ENCODE measurements at regions of chr5 and their contacts with region 1.

Region 1: GRCh38 chr5:7745882-7746610 is 104.9 kb downstream of the CFAP90 start:
- DNase-seq: peak; percentile 48 to 72
- ATAC-seq: peak; percentile 63 to 87; a peak in 4 of 6 replicates
- H3K4me3 ChIP-seq: no peak overlapping the region
- H3K27ac ChIP-seq: no peak overlapping the region
- H3K4me1 ChIP-seq: no peaks in the 10 kb centered on the region
- CTCF ChIP-seq: peak; percentile 70
- EP300 ChIP-seq: no peak
- POLR2A ChIP-seq: no peak
- RAD21 ChIP-seq: peak; percentile 69 to 75

Region 2: GRCh38 chr5:7261049-7261448 is 485.0 kb before region 1 on chr5:
- CTCF ChIA-PET with region 1: interaction called, 15 read pairs
- POLR2A ChIA-PET with region 1: no interaction called
- DNase-seq: peak; percentile 16 to 50
- ATAC-seq: peak; percentile 34 to 74; a peak in 4 of 6 replicates
- H3K4me3 ChIP-seq: no peak overlapping the region
- H3K27ac ChIP-seq: no peak overlapping the region
- H3K4me1 ChIP-seq: no peaks in the 10 kb centered on the region
- CTCF ChIP-seq: peak; percentile 45
- EP300 ChIP-seq: no peak
- POLR2A ChIP-seq: no peak
- RAD21 ChIP-seq: peak; percentile 43 to 71; a peak in 4 of 5 replicates

Region 3: GRCh38 chr5:9042241-9042640 is 1296.2 kb after region 1 on chr5:
- CTCF ChIA-PET with region 1: no interaction called
- POLR2A ChIA-PET with region 1: no interaction called
- DNase-seq: no peak
- ATAC-seq: no peak
- H3K4me3 ChIP-seq: no peak overlapping the region
- H3K27ac ChIP-seq: no peak overlapping the region
- H3K4me1 ChIP-seq: no peaks in the 10 kb centered on the region
- CTCF ChIP-seq: no peak
- EP300 ChIP-seq: no peak
- POLR2A ChIP-seq: no peak
- RAD21 ChIP-seq: no peak

Measured in A549 (cell line).